Dendritic cell treated with granulocyte-macrophage colony-stimulating factor and Interleukin-4, amounts not matched to agents 40 ng/mL and 50 ng/mL, for 4 days (primary cell): ENCODE measurements at regions of chr9 and their contacts with region 1.

Region 1: DNA sequence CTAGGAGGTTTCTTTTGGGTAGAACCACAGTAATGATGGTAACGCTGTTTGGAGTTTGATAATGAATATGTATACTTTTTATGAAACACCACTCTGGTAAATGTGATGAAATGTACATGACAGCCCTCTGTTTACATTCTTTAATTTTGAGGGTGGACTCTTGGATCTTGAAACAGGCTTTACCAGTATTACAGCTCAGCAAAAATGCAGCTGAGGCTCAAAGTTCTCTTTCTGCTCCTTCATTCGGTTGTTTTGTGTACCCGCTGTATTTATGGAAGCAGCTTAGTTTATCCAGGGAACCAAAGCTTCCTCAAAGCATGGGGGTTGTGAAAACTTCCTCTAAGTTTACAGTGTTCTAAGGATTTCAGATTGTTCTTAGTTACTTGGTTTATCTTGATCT is 11.1 kb downstream of the GAPVD1 start:
- H3K4me3 Mint-ChIP-seq: no peak overlapping the region
- H3K27ac Mint-ChIP-seq: peak overlapping the region; percentile 72
- H3K4me1 Mint-ChIP-seq: peaks cover 34% of the 10 kb centered on the region
- H3K27me3 Mint-ChIP-seq: no peaks in the 10 kb centered on the region

Region 2: DNA sequence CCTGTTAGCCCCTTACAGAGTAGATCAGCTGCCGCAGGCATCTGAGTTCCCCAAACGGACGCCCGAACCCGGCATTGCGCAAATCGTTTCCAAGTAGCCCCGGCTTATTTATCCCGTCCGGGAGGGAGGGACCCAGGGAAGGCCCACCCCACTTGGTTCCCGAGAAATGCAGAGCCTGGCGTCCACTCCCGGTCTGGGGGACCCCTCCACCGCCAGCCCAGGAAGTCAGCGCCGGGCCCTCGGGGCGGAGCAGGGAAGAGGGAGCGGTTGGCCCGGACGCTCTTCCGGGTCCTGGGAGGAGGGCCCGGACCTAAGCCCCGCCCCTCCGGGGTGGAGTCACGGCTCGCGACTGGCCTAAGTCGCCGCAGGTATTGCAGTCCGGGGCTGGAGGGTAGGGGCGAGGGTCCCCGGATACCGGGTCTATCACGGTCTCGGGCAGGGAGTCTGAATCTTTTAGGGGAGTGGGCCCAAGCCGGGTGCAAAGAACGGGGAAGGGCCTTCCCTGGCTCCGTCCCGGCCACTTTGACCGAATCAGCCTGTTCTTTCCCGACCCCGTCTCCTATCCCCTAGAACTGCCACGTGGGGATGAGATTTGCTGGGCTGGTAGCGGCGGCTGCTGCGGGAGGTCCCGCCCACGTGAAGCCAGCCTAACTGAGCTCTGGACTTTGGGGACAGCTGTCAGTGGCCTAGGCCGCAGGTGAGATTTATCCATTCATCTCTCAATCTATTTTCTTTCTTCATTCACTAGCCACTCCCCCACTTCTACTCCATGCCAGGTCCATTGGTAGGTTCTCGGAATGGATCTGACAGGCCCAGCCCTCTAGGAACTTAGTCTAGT is 72.3 kb before region 1 on chr9 and contains the start of gene RABEPK:
- intact Hi-C with region 1: loop called (anchors 2 kb)
- H3K4me3 Mint-ChIP-seq: peak within 1 kb of the TSS; percentile 90
- H3K27ac Mint-ChIP-seq: peak within 1 kb of the TSS; percentile 94
- H3K4me1 Mint-ChIP-seq: peaks cover 27% of the 10 kb centered on the region
- H3K27me3 Mint-ChIP-seq: peaks cover 4% of the 10 kb centered on the region

Region 3: GRCh38 chr9:125235804-125236519 is 36.7 kb before region 1 on chr9:
- intact Hi-C with region 1: loop called (anchors 5 kb)
- H3K4me3 Mint-ChIP-seq: peak overlapping the region; percentile 33
- H3K27ac Mint-ChIP-seq: peak overlapping the region; percentile 17
- H3K4me1 Mint-ChIP-seq: peaks cover 42% of the 10 kb centered on the region
- H3K27me3 Mint-ChIP-seq: no peaks in the 10 kb centered on the region

Region 4: GRCh38 chr9:125261501-125262293 is 11.0 kb before region 1 on chr9 and contains the start of gene GAPVD1:
- intact Hi-C with region 1: loop called (anchors 1 kb)
- H3K4me3 Mint-ChIP-seq: peak within 1 kb of the TSS; percentile 100
- H3K27ac Mint-ChIP-seq: peak within 1 kb of the TSS; percentile 93
- H3K4me1 Mint-ChIP-seq: peaks cover 76% of the 10 kb centered on the region
- H3K27me3 Mint-ChIP-seq: no peaks in the 10 kb centered on the region

Region 5: GRCh38 chr9:125568621-125569020 is 295.9 kb after region 1 on chr9:
- intact Hi-C with region 1: no loop called
- H3K4me3 Mint-ChIP-seq: no peak overlapping the region
- H3K27ac Mint-ChIP-seq: no peak overlapping the region
- H3K4me1 Mint-ChIP-seq: no peaks in the 10 kb centered on the region
- H3K27me3 Mint-ChIP-seq: no peaks in the 10 kb centered on the region